ENCODE measurements at regions of chr10 and their contacts with region 1.

Region 1: GRCh38 chr10:30783939-30784500 is 154.5 kb upstream of the LYZL2 start:
- DNase-seq: peak; percentile 89
- H3K4me3 Mint-ChIP-seq: peak overlapping the region; percentile 69
- H3K27ac Mint-ChIP-seq: peak overlapping the region; percentile 0
- H3K4me1 Mint-ChIP-seq: peaks cover 17% of the 10 kb centered on the region
- H3K27me3 Mint-ChIP-seq: no peaks in the 10 kb centered on the region

Region 2: GRCh38 chr10:30687698-30688219 is 96.3 kb before region 1 on chr10:
- CTCF ChIA-PET with region 1: interaction called, 3 read pairs
- intact Hi-C with region 1: loop called (anchors 5 kb)
- DNase-seq: peak; percentile 91
- H3K4me3 Mint-ChIP-seq: no peak overlapping the region
- H3K27ac Mint-ChIP-seq: no peak overlapping the region
- H3K4me1 Mint-ChIP-seq: peaks cover 7% of the 10 kb centered on the region
- H3K27me3 Mint-ChIP-seq: peaks cover 17% of the 10 kb centered on the region

Region 3: DNA sequence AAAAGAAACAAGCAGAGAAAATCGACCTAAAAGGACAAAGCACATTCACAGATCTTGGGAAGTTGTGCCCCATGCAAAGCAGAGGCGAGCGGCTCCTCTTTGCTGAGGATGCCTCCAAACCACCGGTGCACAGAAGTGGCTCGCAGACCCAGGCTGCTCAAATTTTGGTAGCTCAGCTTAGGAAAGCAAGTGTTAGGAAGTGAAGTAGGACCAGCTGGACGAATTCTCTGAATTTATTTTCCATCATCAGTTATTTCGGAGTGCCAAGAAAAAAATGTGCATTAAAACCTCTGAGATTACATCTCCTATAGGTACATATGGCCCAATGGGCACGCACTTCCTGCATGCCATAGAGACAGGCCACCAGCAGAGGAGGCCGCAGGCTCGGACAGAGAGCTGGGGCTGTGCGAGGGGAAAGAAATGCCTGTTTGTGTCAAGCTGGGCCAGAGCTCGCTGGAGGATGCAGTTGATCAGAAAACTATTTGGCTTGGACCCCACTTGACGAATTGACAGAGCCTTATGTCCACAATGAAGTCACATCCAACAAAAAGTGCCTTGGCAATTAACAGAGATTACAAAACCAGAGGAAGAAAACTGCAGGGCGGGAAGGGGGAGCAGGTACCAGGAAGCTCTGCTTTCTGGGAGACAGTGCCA is 32.2 kb before region 1 on chr10:
- CTCF ChIA-PET with region 1: interaction called, 15 read pairs
- intact Hi-C with region 1: no loop called
- DNase-seq: peak; percentile 78
- H3K4me3 Mint-ChIP-seq: no peak overlapping the region
- H3K27ac Mint-ChIP-seq: no peak overlapping the region
- H3K4me1 Mint-ChIP-seq: peaks cover 15% of the 10 kb centered on the region
- H3K27me3 Mint-ChIP-seq: no peaks in the 10 kb centered on the region

Region 4: GRCh38 chr10:31133628-31134302 is 349.7 kb after region 1 on chr10:
- CTCF ChIA-PET with region 1: no interaction called
- intact Hi-C with region 1: loop called (anchors 1 kb)
- DNase-seq: peak; percentile 76
- H3K4me3 Mint-ChIP-seq: peak overlapping the region; percentile 68
- H3K27ac Mint-ChIP-seq: no peak overlapping the region
- H3K4me1 Mint-ChIP-seq: peaks cover 37% of the 10 kb centered on the region
- H3K27me3 Mint-ChIP-seq: no peaks in the 10 kb centered on the region

Region 5: GRCh38 chr10:31490858-31491504 is 707.0 kb after region 1 on chr10:
- CTCF ChIA-PET with region 1: interaction called, 11 read pairs
- intact Hi-C with region 1: loop called (anchors 1 kb)
- DNase-seq: peak; percentile 27
- H3K4me3 Mint-ChIP-seq: no peak overlapping the region
- H3K27ac Mint-ChIP-seq: no peak overlapping the region
- H3K4me1 Mint-ChIP-seq: no peaks in the 10 kb centered on the region
- H3K27me3 Mint-ChIP-seq: no peaks in the 10 kb centered on the region

Region 6: DNA sequence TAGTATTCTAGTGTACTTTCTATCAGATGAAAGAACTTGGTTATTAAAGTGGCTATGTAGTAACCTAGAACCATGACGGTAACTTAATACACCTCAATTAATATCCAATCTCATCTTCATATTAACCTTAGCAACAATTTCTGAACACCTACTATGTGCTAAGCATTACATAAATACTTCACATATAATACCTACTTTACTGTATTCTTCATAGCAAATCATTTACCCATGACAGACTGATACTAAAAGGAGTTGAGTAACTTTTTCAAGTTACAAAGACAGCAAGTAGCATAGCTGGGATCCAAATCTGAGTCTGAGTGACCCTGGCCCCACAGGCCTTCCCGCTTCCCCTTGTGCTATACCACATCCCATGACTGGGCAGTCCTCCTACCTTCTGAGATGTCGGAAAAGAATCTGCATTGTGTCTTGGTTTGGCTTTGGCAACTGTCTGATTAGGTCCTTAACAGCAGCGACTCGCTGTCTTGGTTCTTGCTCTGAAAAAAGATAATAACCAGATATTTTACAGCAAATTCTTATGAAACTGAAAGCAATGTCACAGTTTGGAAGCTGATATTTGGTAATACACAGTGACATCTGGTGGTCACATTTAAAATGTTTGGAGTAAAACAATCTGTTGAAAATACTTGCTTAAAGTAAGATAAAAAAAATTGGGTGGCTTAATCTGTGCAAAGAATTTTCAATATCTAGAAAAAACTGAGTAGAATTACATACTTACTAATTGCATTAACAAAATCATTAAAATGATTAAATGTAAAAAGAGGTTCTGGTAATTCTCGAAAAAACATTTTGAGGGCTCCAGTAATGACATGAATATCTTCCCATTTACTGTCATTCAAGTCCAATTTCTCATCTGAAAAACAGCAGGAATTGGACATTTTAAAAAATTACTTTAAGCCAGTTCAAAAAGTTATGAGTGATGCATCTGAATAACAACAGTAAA is 1024.5 kb after region 1 on chr10:
- CTCF ChIA-PET with region 1: interaction called, 14 read pairs
- intact Hi-C with region 1: loop called (anchors 1 kb)
- DNase-seq: peak; percentile 24
- H3K4me3 Mint-ChIP-seq: peak overlapping the region; percentile 57
- H3K27ac Mint-ChIP-seq: peak overlapping the region; percentile 77
- H3K4me1 Mint-ChIP-seq: peaks cover 6% of the 10 kb centered on the region
- H3K27me3 Mint-ChIP-seq: no peaks in the 10 kb centered on the region

Region 7: GRCh38 chr10:32112055-32112454 is 1328.0 kb after region 1 on chr10:
- CTCF ChIA-PET with region 1: no interaction called
- intact Hi-C with region 1: no loop called
- DNase-seq: no peak
- H3K4me3 Mint-ChIP-seq: no peak overlapping the region
- H3K27ac Mint-ChIP-seq: no peak overlapping the region
- H3K4me1 Mint-ChIP-seq: no peaks in the 10 kb centered on the region
- H3K27me3 Mint-ChIP-seq: peaks cover 5% of the 10 kb centered on the region